Activated naive CD4-positive, alpha-beta T cell treated with anti-CD3 and anti-CD28 coated beads, Interleukin-2, amount 10 ng/mL, durations not matched to agents 7 days and 5 days (primary cell): ENCODE measurements at regions of chr12 and their contacts with region 1.

Region 1: DNA sequence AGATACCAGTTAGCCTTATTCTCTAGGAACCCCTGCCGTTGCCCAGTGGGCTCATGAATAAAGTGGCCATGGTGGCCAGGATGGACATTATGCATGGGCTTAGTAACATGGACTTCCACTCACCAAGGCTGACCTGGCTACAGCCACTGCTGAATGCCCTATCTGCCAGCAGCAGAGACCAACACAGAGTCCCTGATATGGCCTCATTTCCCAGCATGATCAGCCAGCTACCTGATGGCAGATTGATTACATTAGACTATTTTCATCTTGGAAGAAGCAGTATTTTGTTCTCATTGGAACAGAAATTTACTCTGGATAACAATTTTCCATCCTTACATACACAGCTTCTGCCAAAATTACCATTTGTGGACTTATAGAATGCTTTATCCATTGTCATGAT is 16.2 kb upstream of the LPCAT3 start:
- DNase-seq: no peak
- H3K4me3 Mint-ChIP-seq: no peak overlapping the region
- H3K27ac Mint-ChIP-seq: no peak overlapping the region
- H3K4me1 Mint-ChIP-seq: no peaks in the 10 kb centered on the region
- H3K27me3 Mint-ChIP-seq: peaks cover 15% of the 10 kb centered on the region

Region 2: DNA sequence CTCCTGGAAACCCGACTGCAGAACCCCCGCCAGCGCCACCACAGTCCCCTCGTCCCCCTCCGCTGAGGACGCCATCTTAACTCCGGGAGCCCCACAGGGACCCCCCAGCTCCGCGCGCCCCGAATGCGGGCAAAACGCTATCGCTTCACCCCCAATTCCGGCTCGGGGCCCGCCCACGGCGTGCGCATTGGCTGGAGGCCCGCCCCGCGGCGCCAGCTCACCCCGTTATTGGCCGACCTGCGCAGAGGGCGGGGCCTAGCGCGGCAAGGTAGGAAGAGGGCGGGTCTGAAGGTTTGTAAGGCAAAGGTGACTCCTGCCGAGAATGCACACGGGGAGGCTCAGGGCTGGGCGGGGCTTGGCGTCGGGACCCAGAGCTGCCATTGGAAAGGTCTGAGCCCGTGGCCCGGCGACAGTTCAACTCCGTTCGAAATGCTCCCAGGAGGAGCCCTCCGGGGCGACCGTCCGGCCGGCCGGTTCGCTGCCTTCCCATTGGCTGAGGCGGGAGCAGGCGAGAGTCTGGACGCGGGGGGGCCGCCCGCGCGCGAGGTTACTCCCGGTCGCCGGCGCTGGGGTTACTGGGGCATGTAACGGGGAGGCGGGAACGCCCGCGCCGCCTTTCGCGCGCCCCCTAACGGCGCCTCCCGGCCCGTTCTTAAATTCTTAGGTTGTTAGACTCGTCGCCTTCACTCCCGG is 16.0 kb before region 1 on chr12 and contains the start of gene LPCAT3:
- CTCF ChIA-PET with region 1: interaction called, 11 read pairs
- DNase-seq: peak; percentile 98
- H3K4me3 Mint-ChIP-seq: peak within 1 kb of the TSS; percentile 86
- H3K27ac Mint-ChIP-seq: peak within 1 kb of the TSS; percentile 87
- H3K4me1 Mint-ChIP-seq: peaks cover 34% of the 10 kb centered on the region
- H3K27me3 Mint-ChIP-seq: peaks cover 4% of the 10 kb centered on the region